MCF 10A (cell line): ENCODE measurements at regions of chr14 and their contacts with region 1.

Region 1: GRCh38 chr14:103346286-103346685 is 12.2 kb downstream of the EIF5 start:
- DNase-seq: no peak
- H3K4me3 Mint-ChIP-seq: no peak overlapping the region
- H3K27ac Mint-ChIP-seq: no peak overlapping the region
- H3K4me1 Mint-ChIP-seq: no peaks in the 10 kb centered on the region
- H3K27me3 Mint-ChIP-seq: no peaks in the 10 kb centered on the region
- CTCF ChIP-seq: no peak

Region 2: DNA sequence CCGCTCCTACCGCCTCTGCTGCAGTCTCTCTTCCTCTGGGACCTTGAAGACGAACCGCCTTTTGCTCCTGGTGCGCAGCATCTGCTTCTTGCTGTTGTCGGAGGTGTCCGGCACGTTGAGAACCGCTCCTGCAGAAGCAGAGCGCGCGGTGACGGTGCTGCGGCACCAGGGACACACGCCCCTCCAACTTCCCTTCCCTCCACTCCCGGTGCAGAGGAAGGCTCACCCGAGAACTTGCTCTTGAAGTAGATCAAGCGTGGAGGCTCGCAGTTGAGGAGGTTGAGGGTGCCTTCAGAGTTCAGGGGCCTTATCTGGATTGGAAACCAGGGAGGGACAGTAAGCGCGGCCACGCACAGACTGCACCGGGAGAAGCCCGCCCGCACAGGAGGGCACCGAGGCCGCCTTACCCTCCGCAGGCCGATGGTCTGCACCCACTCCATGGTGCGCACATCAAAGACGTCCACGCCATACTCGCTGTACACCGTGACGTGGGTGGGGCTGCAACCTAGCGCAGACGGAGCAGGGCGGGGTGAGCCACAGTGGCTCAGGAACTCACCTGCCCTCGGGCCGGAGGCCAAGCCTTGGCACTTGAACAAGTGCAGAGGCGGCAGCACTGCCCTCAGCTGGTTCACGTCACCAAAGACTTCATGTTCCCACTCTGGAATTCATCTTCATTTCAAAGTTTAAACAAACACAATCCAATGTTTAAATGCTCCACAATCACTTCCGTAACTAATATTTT is 406.3 kb before region 1 on chr14:
- CTCF ChIA-PET with region 1: no interaction called
- POLR2A ChIA-PET with region 1: no interaction called
- intact Hi-C with region 1: no loop called
- DNase-seq: peak; percentile 75
- H3K4me3 Mint-ChIP-seq: no peak overlapping the region
- H3K27ac Mint-ChIP-seq: peak overlapping the region; percentile 7
- H3K4me1 Mint-ChIP-seq: peaks cover 15% of the 10 kb centered on the region
- H3K27me3 Mint-ChIP-seq: no peaks in the 10 kb centered on the region
- CTCF ChIP-seq: no peak

Region 3: GRCh38 chr14:103295972-103296371 is 50.3 kb before region 1 on chr14:
- CTCF ChIA-PET with region 1: no interaction called
- POLR2A ChIA-PET with region 1: no interaction called
- intact Hi-C with region 1: no loop called
- DNase-seq: peak; percentile 54
- H3K4me3 Mint-ChIP-seq: no peak overlapping the region
- H3K27ac Mint-ChIP-seq: no peak overlapping the region
- H3K4me1 Mint-ChIP-seq: peaks cover 3% of the 10 kb centered on the region
- H3K27me3 Mint-ChIP-seq: no peaks in the 10 kb centered on the region
- CTCF ChIP-seq: no peak

Region 4: DNA sequence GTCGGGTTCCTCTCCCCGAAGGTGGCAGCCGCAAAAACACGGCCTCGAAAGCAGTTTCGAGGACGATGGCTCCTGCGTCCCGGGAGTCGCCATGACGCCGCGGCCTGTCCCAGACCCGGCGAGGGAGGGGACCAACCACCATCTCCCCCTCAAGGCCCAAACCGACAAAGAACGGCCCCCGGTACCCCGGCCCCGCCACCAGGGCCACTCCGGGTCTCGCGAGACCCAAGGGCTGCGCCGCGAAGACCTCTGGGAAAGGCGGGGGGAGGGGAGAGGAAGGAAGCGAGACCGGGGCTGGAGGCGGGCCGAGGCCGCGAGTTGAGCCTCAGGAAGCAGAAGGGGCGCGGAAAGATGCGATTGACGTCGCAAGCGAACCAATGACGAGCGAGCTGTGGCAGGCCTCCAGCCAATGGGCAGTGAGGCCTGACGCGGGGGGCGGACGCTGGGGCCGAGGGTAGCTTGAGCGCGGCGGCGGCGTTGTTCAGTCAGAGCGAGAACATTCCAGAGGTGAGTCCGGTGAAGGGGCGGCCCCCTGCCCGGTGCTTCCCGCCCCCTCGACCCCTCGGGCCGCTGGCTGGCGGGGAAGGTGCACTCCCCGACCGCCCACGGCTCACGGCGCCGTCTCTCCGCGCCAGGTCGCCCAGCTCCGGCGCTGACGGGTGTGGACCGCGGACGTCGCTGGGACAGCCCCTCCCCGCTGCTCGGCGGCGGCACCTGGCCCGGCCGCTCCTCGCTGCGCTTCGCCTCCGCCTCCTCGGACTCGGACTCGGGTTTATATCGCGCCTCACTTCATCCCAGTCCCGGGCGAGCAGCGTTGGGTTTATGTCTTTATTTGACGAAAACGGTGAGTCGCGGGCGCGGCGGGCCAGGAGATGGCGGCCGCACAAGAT is 12.3 kb before region 1 on chr14 and contains the start of gene EIF5:
- CTCF ChIA-PET with region 1: interaction called, 3 read pairs
- POLR2A ChIA-PET with region 1: interaction called, 49 read pairs
- intact Hi-C with region 1: no loop called
- DNase-seq: peak; percentile 98
- H3K4me3 Mint-ChIP-seq: peak within 1 kb of the TSS; percentile 89
- H3K27ac Mint-ChIP-seq: peak within 1 kb of the TSS; percentile 97
- H3K4me1 Mint-ChIP-seq: peaks cover 15% of the 10 kb centered on the region
- H3K27me3 Mint-ChIP-seq: no peaks in the 10 kb centered on the region
- CTCF ChIP-seq: peak; percentile 13
- total RNA-seq, gene EIF5: 149 and 327 TPM in 2 replicates